SK-N-SH (cell line): ENCODE measurements at regions of chr20 and their contacts with region 1.

Region 1: DNA sequence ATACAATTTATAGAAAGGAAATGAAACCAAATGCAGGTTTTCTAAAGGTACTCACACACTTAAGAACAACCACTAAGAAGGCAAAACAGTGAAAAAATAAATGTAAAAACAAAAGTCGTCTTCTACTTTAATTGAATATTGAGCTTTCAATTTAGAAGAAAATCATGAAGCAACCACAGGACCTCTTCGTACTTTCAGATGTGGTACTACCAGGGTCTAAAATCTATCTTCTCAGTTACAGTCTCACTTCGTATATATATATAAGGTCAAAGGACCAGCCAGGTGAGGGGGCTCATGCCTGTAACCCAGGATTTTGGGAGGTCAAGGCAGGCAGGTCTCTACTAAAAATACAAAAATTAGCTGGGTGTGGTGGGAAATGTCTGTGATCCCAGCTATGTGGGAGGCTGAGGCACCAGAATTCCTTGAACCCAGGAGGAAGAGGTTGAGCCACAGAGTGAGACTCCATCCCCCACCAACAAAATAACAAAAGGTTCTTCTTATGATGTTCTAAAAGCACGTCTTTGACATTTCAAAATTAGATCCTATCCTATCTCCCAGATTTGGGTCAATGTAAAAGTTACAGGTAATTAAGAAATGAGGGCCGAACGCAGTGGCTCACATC is 12.5 kb downstream of the ROMO1 start:
- DNase-seq: no peak
- H3K4me3 ChIP-seq: no peak overlapping the region
- H3K27ac ChIP-seq: no peak overlapping the region; a peak in 1 of 4 replicates
- H3K4me1 ChIP-seq: peaks cover 0 to 21% of the 10 kb centered on the region in 2 experiments; a peak in 3 of 4 replicates
- H3K27me3 ChIP-seq: no peaks in the 10 kb centered on the region
- CTCF ChIP-seq: no peak
- EP300 ChIP-seq: no peak
- RAD21 ChIP-seq: no peak

Region 2: DNA sequence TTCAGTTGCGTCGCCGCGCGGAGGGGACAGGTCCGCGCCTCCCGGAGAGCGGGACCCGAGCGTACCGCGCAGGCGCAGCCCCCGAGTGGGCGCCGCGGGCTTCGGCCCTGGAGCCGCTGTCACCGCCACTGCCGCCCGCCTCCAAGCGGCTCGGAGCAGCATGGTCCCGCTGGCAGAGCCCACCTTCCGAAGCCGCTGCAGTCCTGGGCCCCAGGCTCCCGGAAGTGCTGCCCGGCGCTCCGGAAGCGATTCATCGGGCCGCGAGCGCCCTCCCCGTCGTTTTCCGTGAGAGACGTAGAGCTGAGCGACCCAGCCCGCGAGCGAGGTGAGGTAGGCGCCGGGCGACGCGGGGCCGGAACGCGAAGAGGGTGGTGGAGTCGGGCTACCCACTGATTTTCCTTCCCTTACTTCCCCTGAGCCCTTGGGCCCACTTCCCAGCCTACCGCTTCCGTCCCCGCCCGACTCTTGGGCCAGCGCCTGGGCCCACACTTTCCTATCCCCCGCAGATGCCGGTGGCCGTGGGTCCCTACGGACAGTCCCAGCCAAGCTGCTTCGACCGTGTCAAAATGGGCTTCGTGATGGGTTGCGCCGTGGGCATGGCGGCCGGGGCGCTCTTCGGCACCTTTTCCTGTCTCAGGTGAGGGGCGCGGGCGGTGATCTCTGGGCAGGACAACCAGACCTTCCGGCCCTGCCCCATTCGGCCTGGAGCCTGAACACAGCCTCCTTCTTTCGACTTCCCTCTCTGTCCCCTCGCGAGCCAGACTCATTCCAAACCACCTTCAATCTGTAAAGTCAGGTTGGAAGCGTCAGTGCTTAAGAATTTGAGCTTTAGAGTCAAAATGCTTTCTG is 12.3 kb before region 1 on chr20 and contains the starts of genes NFS1 and ROMO1:
- CTCF ChIA-PET with region 1: interaction called, 18 read pairs
- POLR2A ChIA-PET with region 1: no interaction called
- DNase-seq: peak; percentile 97
- H3K4me3 ChIP-seq: peak within 1 kb of the TSS; percentile 82 to 90
- H3K27ac ChIP-seq: peak within 1 kb of the TSS; percentile 88 to 89
- H3K4me1 ChIP-seq: peaks cover 0 to 16% of the 10 kb centered on the region in 2 experiments; a peak in 3 of 4 replicates
- H3K27me3 ChIP-seq: no peaks in the 10 kb centered on the region
- CTCF ChIP-seq: peak; percentile 23
- EP300 ChIP-seq: 0 out of 4 replicates have a peak, but pooled peaks of 1 of the 2 experiments have one; percentile 13
- RAD21 ChIP-seq: peak; percentile 11; the same call in 1 of the 2 replicates
- polyA plus RNA-seq, gene NFS1: 75.6 and 89.7 TPM in 2 replicates
- polyA plus RNA-seq, gene ROMO1: 1,087 and 1,273 TPM in 2 replicates

Region 3: DNA sequence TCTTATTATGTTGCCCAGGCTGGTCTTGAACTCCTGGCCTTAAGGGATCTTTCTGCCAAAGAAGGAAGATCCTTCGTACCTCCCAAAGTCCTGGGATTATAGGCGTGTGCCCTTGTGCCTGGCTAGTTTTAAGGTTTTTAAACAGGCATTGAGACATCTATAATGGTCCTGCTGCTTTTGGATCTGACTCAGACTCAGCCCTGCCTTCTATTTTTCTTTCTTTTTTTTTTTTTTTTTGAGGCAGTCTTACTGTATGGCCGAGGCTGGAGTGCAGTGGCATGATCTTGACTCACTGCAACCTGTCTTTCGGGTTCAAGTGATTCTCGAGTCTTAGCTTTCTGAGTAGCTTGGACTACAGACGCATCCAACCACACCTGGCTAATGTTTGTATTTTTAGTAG is 133.9 kb after region 1 on chr20:
- CTCF ChIA-PET with region 1: no interaction called
- POLR2A ChIA-PET with region 1: no interaction called
- DNase-seq: no peak
- H3K4me3 ChIP-seq: no peak overlapping the region
- H3K27ac ChIP-seq: no peak overlapping the region
- H3K4me1 ChIP-seq: peaks cover 4 to 7% of the 10 kb centered on the region in 2 experiments; a peak in 2 of 4 replicates
- H3K27me3 ChIP-seq: no peaks in the 10 kb centered on the region
- CTCF ChIP-seq: no peak
- EP300 ChIP-seq: no peak
- RAD21 ChIP-seq: no peak